ENCODE measurements at regions of chr5 and their contacts with region 1.

Region 1: GRCh38 chr5:112860929-112861637 is at the start of gene SRP19:
- DNase-seq: peak; percentile 89
- H3K4me3 Mint-ChIP-seq: peak within 1 kb of the TSS; percentile 94
- H3K27ac Mint-ChIP-seq: peak within 1 kb of the TSS; percentile 97
- H3K4me1 Mint-ChIP-seq: peaks cover 34% of the 10 kb centered on the region
- H3K27me3 Mint-ChIP-seq: peaks cover 4% of the 10 kb centered on the region
- total RNA-seq, gene SRP19: 63.0 and 66.3 TPM in 2 replicates

Region 2: GRCh38 chr5:112707187-112708102 is 153.6 kb before region 1 on chr5:
- intact Hi-C with region 1: loop called (anchors 5 kb)
- DNase-seq: peak; percentile 98
- H3K4me3 Mint-ChIP-seq: peak overlapping the region; percentile 93
- H3K27ac Mint-ChIP-seq: peak overlapping the region; percentile 71
- H3K4me1 Mint-ChIP-seq: peaks cover 35% of the 10 kb centered on the region
- H3K27me3 Mint-ChIP-seq: peaks cover 3% of the 10 kb centered on the region

Region 3: DNA sequence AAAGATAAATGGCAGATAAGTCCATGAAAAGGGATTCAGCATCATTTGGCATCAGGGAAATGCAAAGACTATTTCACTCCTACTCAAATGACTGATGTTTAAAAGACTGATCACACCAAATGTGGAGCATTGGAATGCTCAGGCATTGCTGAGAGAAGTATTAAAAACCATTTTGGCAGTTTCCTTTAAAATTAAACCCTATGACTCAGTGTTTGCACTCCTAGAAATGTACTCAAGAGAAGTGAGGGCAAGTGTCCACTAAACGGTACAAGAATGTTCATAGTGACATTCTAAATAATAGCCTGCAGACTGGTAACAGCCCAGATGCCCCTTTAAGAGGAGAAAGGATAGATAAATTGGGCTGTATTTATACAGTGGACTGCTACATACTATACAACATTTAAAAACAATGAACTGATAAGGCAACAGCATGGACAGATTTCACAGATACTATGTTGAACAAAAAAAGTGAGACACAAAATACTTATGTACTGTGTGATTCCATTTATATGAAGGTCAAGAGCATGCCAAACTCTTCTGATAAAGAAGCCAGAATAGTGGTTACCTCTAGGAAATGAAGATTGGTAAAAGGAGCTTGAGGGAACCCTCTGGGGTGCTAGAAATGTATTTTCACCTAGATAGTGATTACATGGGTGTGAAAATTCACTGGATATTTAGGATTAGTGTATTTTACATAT is 98.8 kb before region 1 on chr5:
- intact Hi-C with region 1: no loop called
- DNase-seq: no peak
- H3K4me3 Mint-ChIP-seq: no peak overlapping the region
- H3K27ac Mint-ChIP-seq: no peak overlapping the region
- H3K4me1 Mint-ChIP-seq: peaks cover 2% of the 10 kb centered on the region
- H3K27me3 Mint-ChIP-seq: no peaks in the 10 kb centered on the region

Region 4: DNA sequence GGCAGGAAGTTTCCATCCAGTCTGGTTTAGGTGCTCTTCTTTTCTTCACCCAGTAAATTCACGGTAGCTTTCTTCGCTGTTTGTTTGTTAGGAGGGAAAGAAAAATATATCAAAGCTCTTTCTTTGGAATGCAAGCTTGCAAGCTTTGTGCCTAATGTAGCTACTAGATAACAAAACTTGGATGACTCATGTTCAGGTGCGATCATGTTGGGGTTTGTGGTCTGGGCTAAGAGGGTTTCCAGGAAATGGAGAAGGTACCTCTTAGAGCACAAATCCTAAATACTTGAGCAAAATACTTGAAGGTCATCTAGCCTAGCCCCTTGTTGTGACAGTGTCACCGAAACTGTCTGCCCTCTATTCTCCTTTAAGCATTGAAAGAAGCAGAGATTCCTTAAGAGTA is 17.7 kb after region 1 on chr5:
- intact Hi-C with region 1: loop called (anchors 2 kb)
- DNase-seq: peak; percentile 54
- H3K4me3 Mint-ChIP-seq: peak overlapping the region; percentile 9
- H3K27ac Mint-ChIP-seq: peak overlapping the region; percentile 71
- H3K4me1 Mint-ChIP-seq: peaks cover 35% of the 10 kb centered on the region
- H3K27me3 Mint-ChIP-seq: no peaks in the 10 kb centered on the region

Region 5: GRCh38 chr5:112958093-112959088 is 97.3 kb after region 1 on chr5:
- intact Hi-C with region 1: loop called (anchors 5 kb)
- DNase-seq: no peak
- H3K4me3 Mint-ChIP-seq: no peak overlapping the region
- H3K27ac Mint-ChIP-seq: no peak overlapping the region
- H3K4me1 Mint-ChIP-seq: peaks cover 39% of the 10 kb centered on the region
- H3K27me3 Mint-ChIP-seq: no peaks in the 10 kb centered on the region

Region 6: GRCh38 chr5:112976432-112977309 is 115.6 kb after region 1 on chr5 and contains the start of gene DCP2:
- intact Hi-C with region 1: loop called (anchors 1 kb)
- DNase-seq: peak; percentile 96
- H3K4me3 Mint-ChIP-seq: peak within 1 kb of the TSS; percentile 99
- H3K27ac Mint-ChIP-seq: peak within 1 kb of the TSS; percentile 95
- H3K4me1 Mint-ChIP-seq: peaks cover 39% of the 10 kb centered on the region
- H3K27me3 Mint-ChIP-seq: no peaks in the 10 kb centered on the region
- total RNA-seq, gene DCP2: 81.6 and 84.1 TPM in 2 replicates

Region 7: GRCh38 chr5:113022661-113023060 is 161.6 kb after region 1 on chr5:
- intact Hi-C with region 1: no loop called
- DNase-seq: peak; percentile 26
- H3K4me3 Mint-ChIP-seq: peak overlapping the region; percentile 24
- H3K27ac Mint-ChIP-seq: peak overlapping the region; percentile 42
- H3K4me1 Mint-ChIP-seq: peaks cover 63% of the 10 kb centered on the region
- H3K27me3 Mint-ChIP-seq: no peaks in the 10 kb centered on the region

Region 8: GRCh38 chr5:113382731-113383130 is 521.6 kb after region 1 on chr5:
- intact Hi-C with region 1: no loop called
- DNase-seq: no peak
- H3K4me3 Mint-ChIP-seq: no peak overlapping the region
- H3K27ac Mint-ChIP-seq: no peak overlapping the region
- H3K4me1 Mint-ChIP-seq: peaks cover 30% of the 10 kb centered on the region
- H3K27me3 Mint-ChIP-seq: peaks cover 32% of the 10 kb centered on the region

Measured in activated T-helper 2 cell treated with anti-CD3 and anti-CD28 coated beads, Interferon-gamma antibody, Interleukin-2, Interleukin-4, amounts not matched to agents 10 μg/mL and 5 μg/mL and 100 μg/mL, durations not matched to agents 14 hours and 24 hours and 36 hours (primary cell).